Calu3 (cell line): ENCODE measurements at regions of chr12 and their contacts with region 1.

Region 1: GRCh38 chr12:57182921-57183790 is 33.4 kb upstream of the NXPH4 start:
- DNase-seq: peak; percentile 93
- H3K4me3 Mint-ChIP-seq: no peak overlapping the region
- H3K27ac Mint-ChIP-seq: no peak overlapping the region
- H3K4me1 Mint-ChIP-seq: no peaks in the 10 kb centered on the region
- H3K27me3 Mint-ChIP-seq: peaks cover 9% of the 10 kb centered on the region
- CTCF ChIP-seq: peak; percentile 83

Region 2: GRCh38 chr12:57008178-57008577 is 175.0 kb before region 1 on chr12:
- CTCF ChIA-PET with region 1: no interaction called
- intact Hi-C with region 1: loop called (anchors 2 kb)
- DNase-seq: peak; percentile 32
- H3K4me3 Mint-ChIP-seq: no peak overlapping the region
- H3K27ac Mint-ChIP-seq: no peak overlapping the region
- H3K4me1 Mint-ChIP-seq: peaks cover 14% of the 10 kb centered on the region
- H3K27me3 Mint-ChIP-seq: peaks cover 38% of the 10 kb centered on the region
- CTCF ChIP-seq: no peak

Region 3: DNA sequence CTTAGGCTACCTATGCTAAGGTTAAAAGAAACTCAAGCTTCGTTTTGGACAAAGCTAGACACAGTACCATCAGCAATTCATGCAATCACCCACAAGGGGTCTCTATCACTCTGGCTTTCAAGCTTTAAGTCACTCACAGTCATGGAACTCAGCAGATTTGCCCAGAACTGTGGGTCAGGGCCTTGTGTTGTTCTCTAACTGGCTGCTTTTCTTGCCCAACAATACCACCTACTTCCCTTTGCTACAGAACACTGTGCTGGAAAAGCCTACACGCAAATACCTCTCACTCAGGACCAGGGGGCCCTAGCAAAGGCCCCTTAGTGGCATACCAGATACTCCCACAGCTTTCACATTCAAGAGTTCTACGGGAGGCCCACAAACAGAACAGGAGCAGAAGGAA is 113.6 kb before region 1 on chr12:
- CTCF ChIA-PET with region 1: interaction called, 11 read pairs
- intact Hi-C with region 1: loop called (anchors 5 kb)
- DNase-seq: peak; percentile 68
- H3K4me3 Mint-ChIP-seq: no peak overlapping the region
- H3K27ac Mint-ChIP-seq: no peak overlapping the region
- H3K4me1 Mint-ChIP-seq: no peaks in the 10 kb centered on the region
- H3K27me3 Mint-ChIP-seq: no peaks in the 10 kb centered on the region
- CTCF ChIP-seq: peak; percentile 64

Region 4: DNA sequence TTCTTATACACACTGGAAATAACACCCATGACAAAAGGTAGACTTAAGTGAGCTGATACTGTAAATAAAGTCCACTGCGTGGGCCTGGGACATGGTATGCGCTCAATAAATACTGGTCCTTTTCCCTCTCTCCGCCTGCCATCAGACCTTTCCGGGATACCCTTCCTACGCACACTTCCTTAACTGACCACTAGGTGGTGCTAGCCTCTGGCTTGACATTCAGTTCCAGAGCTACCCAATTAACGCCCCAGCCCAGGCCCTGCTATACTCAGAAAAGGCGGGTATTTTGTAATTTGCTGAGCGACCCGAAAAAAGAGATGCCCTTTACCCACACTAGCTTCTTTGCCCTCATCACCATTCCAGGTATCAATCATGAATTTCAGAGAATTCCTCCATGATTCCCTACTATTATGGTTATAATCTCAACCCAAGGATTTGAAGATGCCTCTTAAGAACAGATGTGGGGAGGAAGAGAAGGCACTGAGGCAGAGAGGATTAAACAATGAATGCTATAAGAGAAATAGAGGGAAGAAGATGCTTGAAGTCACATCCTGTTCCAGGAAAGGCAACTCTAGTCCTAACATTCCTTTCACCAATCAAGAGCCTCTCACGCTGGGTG is 58.8 kb before region 1 on chr12:
- CTCF ChIA-PET with region 1: interaction called, 39 read pairs
- intact Hi-C with region 1: loop called (anchors 1 kb)
- DNase-seq: peak; percentile 84
- H3K4me3 Mint-ChIP-seq: no peak overlapping the region
- H3K27ac Mint-ChIP-seq: no peak overlapping the region
- H3K4me1 Mint-ChIP-seq: no peaks in the 10 kb centered on the region
- H3K27me3 Mint-ChIP-seq: peaks cover 21% of the 10 kb centered on the region
- CTCF ChIP-seq: peak; percentile 91